ENCODE measurements at regions of chr11 and their contacts with region 1.

Region 1: DNA sequence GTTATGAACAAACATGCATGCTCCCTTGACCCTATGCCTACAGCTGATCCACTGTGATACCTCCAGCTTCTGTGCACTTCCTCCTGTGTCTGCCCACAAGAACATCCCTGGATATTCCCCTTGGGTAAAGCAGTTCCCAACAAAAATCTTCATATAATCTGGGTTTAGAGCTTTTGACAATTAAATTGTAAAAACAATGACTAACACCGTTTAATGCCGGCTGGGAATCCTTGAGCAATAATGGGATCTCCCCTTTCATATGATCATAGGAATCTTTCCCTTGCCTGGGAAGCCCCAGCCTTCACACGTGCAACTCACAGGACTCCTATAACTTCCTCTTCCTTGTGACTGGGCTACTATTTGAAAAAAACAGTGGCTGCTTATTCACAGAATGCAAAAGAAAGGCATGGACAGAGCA is 6.3 kb upstream of the ZC3H12C start:
- DNase-seq: no peak
- H3K4me3 ChIP-seq: no peak overlapping the region
- H3K27ac ChIP-seq: peak overlapping the region in 2 of 3 donors; percentile 78 to 81
- H3K4me1 ChIP-seq: peaks cover 12 to 21% of the 10 kb centered on the region in 2 donors
- H3K27me3 ChIP-seq: no peaks in the 10 kb centered on the region
- CTCF ChIP-seq: no peak
- POLR2A ChIP-seq: no peak

Region 2: DNA sequence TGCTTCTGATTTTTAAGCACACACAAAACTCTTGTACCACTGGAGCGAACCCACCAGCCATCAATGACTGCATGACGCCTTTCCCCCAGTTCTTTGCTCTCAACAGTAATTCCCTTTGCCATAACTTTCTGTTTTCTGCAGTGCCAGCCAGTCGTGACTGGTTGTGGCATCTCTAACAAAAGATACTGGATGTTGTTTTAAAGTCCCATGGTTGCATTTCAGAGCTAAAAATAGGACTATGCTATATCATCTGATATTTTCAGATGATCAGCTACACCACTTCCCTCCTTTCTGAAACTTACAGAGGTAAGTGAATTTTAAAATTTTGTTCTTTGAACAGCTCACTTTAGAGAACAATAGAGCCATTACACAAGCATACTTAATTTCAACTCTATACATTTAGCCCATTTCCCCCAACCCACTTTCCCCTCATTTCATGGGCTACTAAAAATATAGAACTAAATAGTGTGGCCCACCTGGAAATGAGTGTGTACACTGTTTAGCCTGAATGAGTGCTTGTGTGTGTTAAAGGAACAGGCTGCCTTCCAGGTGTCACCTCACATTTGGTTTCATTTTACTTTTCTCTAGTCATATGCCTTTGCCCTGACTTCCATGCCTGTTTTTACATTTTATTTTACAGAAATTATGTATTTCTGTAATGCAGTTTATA is 130.6 kb before region 1 on chr11:
- intact Hi-C with region 1: loop called (anchors 10 kb)
- DNase-seq: no peak
- H3K4me3 ChIP-seq: no peak overlapping the region
- H3K27ac ChIP-seq: no peak overlapping the region
- H3K4me1 ChIP-seq: no peaks in the 10 kb centered on the region
- H3K27me3 ChIP-seq: no peaks in the 10 kb centered on the region
- CTCF ChIP-seq: no peak
- POLR2A ChIP-seq: no peak

Region 3: GRCh38 chr11:110035357-110035756 is 51.5 kb before region 1 on chr11:
- intact Hi-C with region 1: no loop called
- DNase-seq: no peak
- H3K4me3 ChIP-seq: no peak overlapping the region
- H3K27ac ChIP-seq: no peak overlapping the region
- H3K4me1 ChIP-seq: no peaks in the 10 kb centered on the region
- H3K27me3 ChIP-seq: no peaks in the 10 kb centered on the region
- CTCF ChIP-seq: no peak
- POLR2A ChIP-seq: no peak

Measured in thyroid gland (tissue), 4 donors.